ENCODE measurements at regions of chr1 and their contacts with region 1.

Region 1: GRCh38 chr1:117051224-117052064 is 8.7 kb upstream of the TTF2 start:
- DNase-seq: peak in 2 of 3 donors; percentile 60 to 77
- ATAC-seq: peak; percentile 95
- H3K4me3 ChIP-seq: no peak overlapping the region
- H3K4me1 ChIP-seq: peaks cover 7% of the 10 kb centered on the region
- CTCF ChIP-seq: no peak

Region 2: DNA sequence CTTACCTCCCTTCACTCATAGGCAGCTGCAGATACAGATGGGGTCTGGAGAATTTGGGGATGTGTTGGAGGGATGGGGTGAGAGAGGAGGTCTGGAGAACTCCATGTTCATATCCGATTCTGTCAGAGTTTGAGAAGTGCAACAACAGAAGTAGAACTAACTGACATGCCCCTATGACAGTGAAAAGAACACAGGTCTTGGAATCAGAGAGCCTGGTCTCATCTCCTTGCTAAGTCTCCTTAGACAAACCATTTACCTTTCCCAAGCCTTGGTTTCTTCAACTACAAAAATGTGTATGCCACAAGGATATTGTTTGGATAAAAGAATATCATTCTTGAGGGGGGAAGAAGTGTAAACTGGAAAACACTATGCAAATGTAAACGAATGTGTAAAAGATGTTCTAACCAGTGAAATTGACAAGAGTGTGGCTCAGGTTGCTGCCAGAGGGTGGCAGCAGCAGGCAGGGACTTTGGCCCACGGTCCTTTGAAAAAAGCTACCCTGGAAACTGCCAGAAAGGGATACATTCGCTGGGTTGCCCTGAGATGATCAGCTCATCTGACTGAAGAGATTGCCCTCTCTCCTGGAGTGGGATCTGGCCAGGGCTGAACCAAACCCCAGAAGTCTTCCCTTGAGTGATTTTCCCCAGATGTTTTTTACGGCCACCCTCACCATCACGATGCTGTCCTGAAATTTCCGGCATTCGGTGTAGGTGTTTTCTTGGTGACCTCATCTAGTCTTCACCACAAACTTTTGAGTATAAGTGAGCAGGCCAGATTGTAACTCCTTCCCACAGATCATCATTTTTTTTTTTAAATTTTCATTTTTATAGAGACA is 314.2 kb before region 1 on chr1:
- intact Hi-C with region 1: loop called (anchors 5 kb)
- DNase-seq: peak in 2 of 3 donors; percentile 75 to 79
- ATAC-seq: peak; percentile 83
- H3K4me3 ChIP-seq: no peak overlapping the region
- H3K4me1 ChIP-seq: no peaks in the 10 kb centered on the region
- CTCF ChIP-seq: peak; percentile 53

Region 3: DNA sequence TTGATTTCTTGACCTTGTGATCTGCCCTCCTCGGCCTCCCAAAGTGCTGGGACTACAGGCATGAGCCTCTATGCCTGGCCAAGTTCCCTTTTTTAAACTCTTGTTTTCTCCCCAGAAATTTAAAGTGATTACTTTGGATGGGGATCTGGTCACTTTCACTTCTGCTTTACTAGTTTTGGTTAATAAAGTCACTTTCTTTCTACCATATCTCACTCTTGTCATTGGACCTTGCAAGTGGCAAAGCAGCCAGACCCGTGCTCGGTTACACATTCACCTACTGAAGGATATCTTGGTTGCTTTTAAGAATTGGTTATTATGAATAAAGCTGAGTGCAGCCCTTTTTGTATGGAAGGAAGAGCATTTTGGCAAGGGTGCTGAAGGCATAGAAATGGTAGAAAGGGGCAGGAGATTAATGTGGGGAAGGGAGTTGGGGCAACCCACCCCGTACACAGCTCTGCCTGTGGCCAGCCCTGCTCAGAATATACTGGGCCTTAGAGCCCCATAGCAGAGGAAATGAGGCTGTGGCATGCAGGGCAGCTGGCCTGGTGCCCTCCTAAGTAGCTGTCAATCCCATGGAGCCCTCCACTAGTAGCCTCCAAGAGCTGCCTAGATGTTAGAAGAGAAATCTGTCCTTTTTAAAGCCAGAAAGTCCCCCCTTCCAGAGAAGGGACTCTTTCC is 256.5 kb before region 1 on chr1:
- intact Hi-C with region 1: no loop called
- DNase-seq: no peak
- ATAC-seq: no peak
- H3K4me3 ChIP-seq: no peak overlapping the region
- H3K4me1 ChIP-seq: no peaks in the 10 kb centered on the region
- CTCF ChIP-seq: no peak

Region 4: DNA sequence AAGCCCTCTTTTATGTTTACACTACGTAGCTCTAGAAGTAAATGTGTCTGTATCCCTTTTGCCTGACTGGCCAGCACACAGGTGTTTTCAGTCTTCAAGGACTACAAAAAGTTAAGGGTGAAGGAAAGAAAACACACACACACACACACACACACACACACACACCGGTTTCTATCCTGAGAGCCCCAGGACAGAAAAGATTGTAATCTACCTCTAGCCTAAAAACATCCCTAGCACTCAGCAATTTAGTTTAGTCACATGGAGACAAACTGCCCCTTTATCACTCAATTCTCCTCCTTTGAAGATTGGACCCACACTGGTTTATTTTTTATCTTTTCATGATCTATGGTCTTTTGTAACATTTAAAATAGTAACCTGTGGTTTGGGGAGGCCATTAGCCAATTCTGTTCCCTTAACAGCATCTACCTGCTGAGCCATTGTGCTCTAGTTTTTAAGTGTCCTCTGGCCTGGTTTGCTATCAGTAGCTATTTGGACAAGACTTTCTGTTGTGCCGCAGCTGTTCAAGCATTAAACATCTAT is 85.9 kb after region 1 on chr1:
- intact Hi-C with region 1: no loop called
- DNase-seq: no peak
- ATAC-seq: no peak
- H3K4me3 ChIP-seq: no peak overlapping the region
- H3K4me1 ChIP-seq: no peaks in the 10 kb centered on the region
- CTCF ChIP-seq: no peak

Region 5: DNA sequence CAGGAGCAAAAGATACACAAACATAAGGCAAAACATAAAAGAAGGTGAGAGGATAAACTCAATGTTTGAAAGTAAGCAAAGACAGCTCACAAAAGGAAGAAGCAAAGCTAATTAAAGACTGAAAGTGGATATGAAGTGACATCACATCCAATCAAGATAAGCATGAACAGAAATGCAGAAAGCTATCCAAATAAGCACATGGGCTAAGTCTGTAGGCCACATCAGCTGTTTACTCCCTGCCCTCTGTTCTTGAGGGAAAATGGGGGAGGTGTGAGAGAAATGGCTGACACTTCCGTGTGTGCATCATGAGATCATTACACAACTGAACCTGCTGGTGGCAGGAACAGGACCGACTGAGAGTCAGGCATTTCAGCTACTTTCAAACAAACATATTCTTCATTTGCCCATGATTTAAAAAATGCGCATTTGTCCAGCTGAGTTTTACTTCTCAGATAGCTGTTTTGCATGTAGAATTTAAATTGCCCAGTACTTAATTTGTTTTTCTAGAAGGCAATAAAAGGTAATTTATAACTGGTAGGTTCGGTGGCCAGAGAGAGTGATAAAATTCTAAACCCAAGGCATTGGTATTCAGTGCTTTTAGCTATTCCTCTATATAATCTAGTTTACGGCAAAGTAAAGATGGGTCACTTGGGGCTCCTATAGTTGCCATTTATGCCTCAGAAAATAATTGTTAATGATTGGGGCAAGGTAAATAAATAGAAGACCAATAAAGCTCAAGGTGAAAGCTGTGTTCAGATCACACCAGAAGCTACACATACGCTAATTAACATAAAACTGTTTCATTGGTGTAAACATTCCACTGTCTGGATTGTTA is 288.6 kb after region 1 on chr1:
- intact Hi-C with region 1: no loop called
- DNase-seq: peak in 1 of 3 donors; percentile 65
- ATAC-seq: peak; percentile 98
- H3K4me3 ChIP-seq: no peak overlapping the region
- H3K4me1 ChIP-seq: peaks cover 12% of the 10 kb centered on the region
- CTCF ChIP-seq: no peak

Region 6: GRCh38 chr1:117493906-117494305 is 442.5 kb after region 1 on chr1:
- intact Hi-C with region 1: no loop called
- DNase-seq: no peak
- ATAC-seq: no peak
- H3K4me3 ChIP-seq: no peak overlapping the region
- H3K4me1 ChIP-seq: no peaks in the 10 kb centered on the region
- CTCF ChIP-seq: no peak